Activated B cell treated with CpG ODN at 0.5 μM for 24 hours (primary cell): ENCODE measurements at regions of chr17 and their contacts with region 1.

Region 1: DNA sequence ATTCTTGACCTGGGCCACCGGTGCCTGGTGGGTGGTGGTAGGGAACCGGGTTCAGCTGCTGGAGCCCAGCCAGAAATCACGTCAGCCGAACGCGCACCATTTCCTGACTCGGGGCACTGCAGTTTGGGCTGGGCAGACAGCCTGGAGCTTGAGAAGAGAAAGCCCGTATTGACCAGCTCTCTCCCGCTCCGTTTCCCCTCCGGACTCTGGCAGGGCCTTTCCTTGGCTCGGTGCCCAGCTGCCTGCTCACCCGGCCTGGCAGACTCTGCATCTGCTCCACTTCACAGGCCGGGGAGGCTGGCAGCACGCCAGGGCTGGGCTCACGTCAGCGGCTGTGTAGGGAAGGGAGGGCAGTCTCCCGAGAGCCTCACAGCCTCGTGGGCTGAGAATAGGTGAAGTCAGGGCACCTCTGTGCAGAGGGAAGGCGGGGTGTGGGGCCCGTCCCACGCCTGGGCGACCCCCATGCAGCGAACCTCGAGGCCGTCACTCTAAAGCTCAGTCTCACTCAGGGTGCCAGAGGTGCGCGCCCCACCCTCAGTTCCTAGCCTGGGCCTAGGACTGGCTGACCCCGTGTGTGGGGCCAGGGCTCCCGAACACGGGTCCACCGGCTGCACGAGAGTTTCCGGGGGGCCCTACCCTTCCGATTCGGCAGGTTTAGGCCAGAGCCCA is 59.1 kb downstream of the OR1D5 start:
- DNase-seq: peak; percentile 80
- ATAC-seq: peak; percentile 55
- H3K4me3 Mint-ChIP-seq: peak overlapping the region; percentile 72
- H3K27ac Mint-ChIP-seq: peak overlapping the region; percentile 88
- H3K4me1 Mint-ChIP-seq: peaks cover 41% of the 10 kb centered on the region
- H3K27me3 Mint-ChIP-seq: no peaks in the 10 kb centered on the region
- CTCF ChIP-seq: no peak

Region 2: GRCh38 chr17:2592971-2593820 is 411.1 kb before region 1 on chr17 and contains the start of gene PAFAH1B1:
- CTCF ChIA-PET with region 1: no interaction called
- POLR2A ChIA-PET with region 1: no interaction called
- intact Hi-C with region 1: loop called (anchors 5 kb)
- DNase-seq: peak; percentile 94
- ATAC-seq: peak; percentile 79
- H3K4me3 Mint-ChIP-seq: peak within 1 kb of the TSS; percentile 94
- H3K27ac Mint-ChIP-seq: peak within 1 kb of the TSS; percentile 90
- H3K4me1 Mint-ChIP-seq: peaks cover 32% of the 10 kb centered on the region
- H3K27me3 Mint-ChIP-seq: no peaks in the 10 kb centered on the region
- CTCF ChIP-seq: no peak
- total RNA-seq, gene PAFAH1B1: 134 and 138 TPM in 2 replicates

Region 3: GRCh38 chr17:2786176-2786881 is 217.9 kb before region 1 on chr17:
- CTCF ChIA-PET with region 1: interaction called, 7 read pairs
- POLR2A ChIA-PET with region 1: interaction called, 12 read pairs
- intact Hi-C with region 1: loop called (anchors 2 kb)
- DNase-seq: peak; percentile 88
- ATAC-seq: peak; percentile 98
- H3K4me3 Mint-ChIP-seq: no peak overlapping the region
- H3K27ac Mint-ChIP-seq: no peak overlapping the region
- H3K4me1 Mint-ChIP-seq: peaks cover 25% of the 10 kb centered on the region
- H3K27me3 Mint-ChIP-seq: no peaks in the 10 kb centered on the region
- CTCF ChIP-seq: peak; percentile 38

Region 4: DNA sequence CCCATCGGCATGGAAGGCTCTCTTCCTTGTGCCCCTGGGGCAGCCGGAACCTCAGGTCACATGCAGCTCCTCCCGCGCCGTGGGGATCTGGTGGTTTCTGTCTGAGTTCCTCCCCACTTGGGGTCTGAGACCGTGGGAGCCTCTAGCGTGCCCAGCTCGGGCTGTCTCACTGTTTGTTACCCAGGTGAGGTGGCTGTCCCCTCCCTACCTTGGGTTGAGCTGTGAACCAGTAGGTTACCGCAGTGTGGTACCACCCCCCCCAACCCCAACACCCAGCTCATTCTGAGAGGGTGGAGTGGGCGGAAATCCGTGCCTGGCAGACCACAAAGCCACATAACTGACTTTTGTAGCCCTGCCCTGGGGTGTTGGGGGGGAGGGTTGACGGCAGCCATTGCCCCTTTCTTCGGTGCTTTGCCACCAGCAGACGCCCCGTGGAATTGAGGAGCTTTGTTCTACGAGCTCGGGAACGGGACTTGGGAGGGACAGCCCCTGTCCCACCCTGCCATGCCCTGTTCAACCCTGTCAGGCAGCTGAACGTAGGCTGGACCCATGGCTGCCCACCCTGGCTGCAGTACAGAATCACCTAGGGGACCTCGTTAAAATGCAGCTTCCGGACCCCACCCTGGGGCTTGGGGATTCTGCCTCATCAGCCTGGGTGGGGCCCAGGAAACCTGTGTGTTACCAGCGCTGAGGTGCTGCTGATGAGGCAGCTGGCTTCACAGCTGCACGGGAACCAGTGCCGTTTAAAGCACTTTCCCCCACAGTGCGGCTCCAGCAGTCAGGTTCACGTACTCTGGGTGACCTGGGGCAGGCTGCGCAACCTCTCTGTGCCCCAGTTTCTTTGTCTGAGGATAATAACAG is 189.6 kb before region 1 on chr17:
- CTCF ChIA-PET with region 1: interaction called, 3 read pairs
- POLR2A ChIA-PET with region 1: interaction called, 18 read pairs
- intact Hi-C with region 1: no loop called
- DNase-seq: peak; percentile 67
- ATAC-seq: peak; percentile 84
- H3K4me3 Mint-ChIP-seq: peak overlapping the region; percentile 64
- H3K27ac Mint-ChIP-seq: peak overlapping the region; percentile 73
- H3K4me1 Mint-ChIP-seq: peaks cover 46% of the 10 kb centered on the region
- H3K27me3 Mint-ChIP-seq: no peaks in the 10 kb centered on the region
- CTCF ChIP-seq: no peak

Region 5: GRCh38 chr17:2847381-2848333 is 156.6 kb before region 1 on chr17:
- CTCF ChIA-PET with region 1: interaction called, 4 read pairs
- POLR2A ChIA-PET with region 1: interaction called, 4 read pairs
- intact Hi-C with region 1: loop called (anchors 2 kb)
- DNase-seq: no peak
- ATAC-seq: no peak
- H3K4me3 Mint-ChIP-seq: no peak overlapping the region
- H3K27ac Mint-ChIP-seq: no peak overlapping the region
- H3K4me1 Mint-ChIP-seq: peaks cover 15% of the 10 kb centered on the region
- H3K27me3 Mint-ChIP-seq: peaks cover 31% of the 10 kb centered on the region
- CTCF ChIP-seq: no peak

Region 6: DNA sequence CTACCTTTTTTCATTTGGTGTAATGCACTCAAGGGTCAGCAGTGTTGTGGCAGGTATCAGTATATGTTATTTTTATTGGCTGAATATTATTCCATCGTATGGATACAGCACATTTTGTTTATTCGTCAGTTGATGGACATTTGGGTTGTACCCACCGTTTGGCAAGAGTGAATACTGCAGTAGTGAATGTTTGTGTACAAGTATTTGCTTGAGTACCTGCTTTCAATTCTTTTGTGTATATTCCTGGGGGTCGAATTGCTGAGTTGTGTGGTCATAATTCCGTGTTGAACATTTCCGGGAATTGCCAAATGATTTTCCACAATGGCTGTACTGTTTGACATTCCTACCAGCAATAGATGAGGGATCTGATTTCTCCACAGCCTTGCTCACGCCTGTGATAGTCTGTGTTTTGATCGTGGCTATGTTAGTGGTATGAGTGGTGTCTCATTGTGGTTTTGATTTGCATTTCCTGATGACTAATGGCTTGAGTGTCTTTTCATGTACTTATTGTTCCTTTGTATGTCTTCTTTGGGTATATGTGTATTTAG is 49.3 kb before region 1 on chr17:
- CTCF ChIA-PET with region 1: no interaction called
- POLR2A ChIA-PET with region 1: no interaction called
- intact Hi-C with region 1: loop called (anchors 5 kb)
- DNase-seq: no peak
- ATAC-seq: peak; percentile 78
- H3K4me3 Mint-ChIP-seq: no peak overlapping the region
- H3K27ac Mint-ChIP-seq: no peak overlapping the region
- H3K4me1 Mint-ChIP-seq: peaks cover 13% of the 10 kb centered on the region
- H3K27me3 Mint-ChIP-seq: peaks cover 8% of the 10 kb centered on the region
- CTCF ChIP-seq: no peak